Lower leg skin (tissue), 4 donors: ENCODE measurements at regions of chr20 and their contacts with region 1.

Region 1: DNA sequence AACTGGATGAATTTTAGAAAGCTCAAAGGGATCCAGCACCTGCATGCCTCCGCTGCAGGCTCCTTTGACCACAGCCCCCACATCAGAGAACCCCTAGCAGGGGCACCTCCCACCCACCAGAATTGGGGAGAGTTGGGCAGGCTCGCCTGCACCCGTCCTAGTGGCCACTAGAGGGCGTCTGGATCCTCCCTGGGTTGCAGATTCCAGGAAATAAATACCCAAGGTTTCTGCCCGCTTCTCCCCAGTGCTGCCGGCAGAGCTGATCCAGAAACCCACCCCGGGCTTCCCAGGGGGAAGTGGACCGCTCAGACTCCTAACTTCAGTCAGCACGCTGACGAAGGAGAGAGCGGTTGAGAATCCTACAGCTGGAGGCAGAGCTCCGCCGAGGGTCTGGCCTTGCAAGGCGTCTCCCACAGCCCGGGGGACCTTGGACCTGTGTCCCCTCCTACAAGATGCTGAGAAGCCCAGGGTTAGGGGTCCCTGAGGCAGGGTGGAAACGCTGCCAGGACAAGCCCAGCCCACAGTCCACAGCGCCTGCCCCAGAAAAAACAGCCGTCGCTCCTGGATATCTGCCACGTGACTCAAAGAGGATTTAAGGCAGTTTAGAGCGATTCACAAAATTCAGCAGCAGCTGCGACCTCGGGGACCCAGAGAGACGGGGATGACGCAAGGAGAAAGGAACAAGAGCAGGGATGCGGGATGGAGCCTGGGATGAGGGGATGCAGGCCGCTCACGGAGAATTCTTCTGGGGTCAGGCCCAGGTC is 32.6 kb upstream of the PHACTR3 start:
- DNase-seq: peak; percentile 29 to 90
- H3K4me3 ChIP-seq: peak overlapping the region; percentile 1
- CTCF ChIP-seq: no peak
- POLR2A ChIP-seq: no peak

Region 2: GRCh38 chr20:59455402-59456341 is 116.1 kb before region 1 on chr20:
- intact Hi-C with region 1: no loop called
- DNase-seq: peak in 1 of 2 donors; percentile 22
- H3K4me3 ChIP-seq: no peak overlapping the region
- CTCF ChIP-seq: peak in 1 of 3 donors; percentile 22
- POLR2A ChIP-seq: no peak

Region 3: GRCh38 chr20:59752101-59752816 is 180.5 kb after region 1 on chr20:
- intact Hi-C with region 1: loop called (anchors 2 kb)
- DNase-seq: peak in 1 of 2 donors; percentile 24
- H3K4me3 ChIP-seq: no peak overlapping the region
- CTCF ChIP-seq: no peak
- POLR2A ChIP-seq: no peak